CD4-positive, alpha-beta T cell (primary cell): ENCODE measurements at regions of chr1 and their contacts with region 1.

Region 1: DNA sequence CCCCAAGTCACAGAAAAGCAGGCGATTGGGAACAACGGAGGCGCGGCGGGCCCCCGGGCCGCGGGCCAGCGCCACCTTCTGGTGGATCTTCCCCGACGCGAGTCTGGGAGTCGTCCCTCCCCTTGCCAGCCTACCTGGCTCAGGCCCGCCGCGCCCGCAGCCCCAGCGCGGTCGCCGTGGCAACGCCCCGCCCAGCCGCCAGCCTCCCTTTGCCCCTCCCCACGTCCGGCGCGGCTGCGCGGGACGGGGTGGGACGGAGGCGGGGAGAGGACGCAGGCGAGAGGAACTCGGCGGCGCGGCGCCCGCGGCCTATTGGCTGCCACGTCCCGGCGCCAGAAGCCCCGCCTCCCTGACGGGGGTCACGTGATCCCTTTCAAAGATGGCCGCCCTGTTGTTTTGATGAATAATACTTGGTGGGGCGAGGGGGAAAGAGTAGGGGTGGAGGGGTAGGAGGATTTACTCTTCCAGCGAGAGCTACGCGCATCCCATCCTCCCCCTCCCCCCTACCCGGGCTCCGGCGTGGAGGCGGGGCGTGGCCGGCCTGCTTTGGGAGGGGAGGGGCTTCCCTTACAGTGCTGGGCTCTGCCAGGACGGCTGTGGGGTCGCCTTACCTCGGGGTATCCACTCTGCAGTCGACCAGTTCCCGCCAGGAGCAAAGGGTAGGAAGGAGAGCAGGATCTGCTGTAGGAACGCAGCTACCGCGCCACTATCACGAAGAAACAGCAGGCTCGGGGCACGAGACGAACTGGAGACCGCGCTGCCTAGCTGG is at the start of gene UBE4B:
- DNase-seq: peak; percentile 96 to 100 (median 99)
- ATAC-seq: peak; percentile 93
- H3K4me3 ChIP-seq: peak within 1 kb of the TSS; percentile 99
- H3K4me3 Mint-ChIP-seq: peak within 1 kb of the TSS; percentile 98
- H3K27ac ChIP-seq: peak within 1 kb of the TSS; percentile 91 to 95
- H3K27ac Mint-ChIP-seq: peak within 1 kb of the TSS; percentile 99
- H3K4me1 ChIP-seq: peaks cover 28% of the 10 kb centered on the region
- H3K4me1 Mint-ChIP-seq: peaks cover 30% of the 10 kb centered on the region
- H3K27me3 ChIP-seq: no peaks in the 10 kb centered on the region
- H3K27me3 Mint-ChIP-seq: no peaks in the 10 kb centered on the region
- CTCF ChIP-seq: peak; percentile 74
- total RNA-seq, gene UBE4B: 27.9 to 28.7 TPM

Region 2: DNA sequence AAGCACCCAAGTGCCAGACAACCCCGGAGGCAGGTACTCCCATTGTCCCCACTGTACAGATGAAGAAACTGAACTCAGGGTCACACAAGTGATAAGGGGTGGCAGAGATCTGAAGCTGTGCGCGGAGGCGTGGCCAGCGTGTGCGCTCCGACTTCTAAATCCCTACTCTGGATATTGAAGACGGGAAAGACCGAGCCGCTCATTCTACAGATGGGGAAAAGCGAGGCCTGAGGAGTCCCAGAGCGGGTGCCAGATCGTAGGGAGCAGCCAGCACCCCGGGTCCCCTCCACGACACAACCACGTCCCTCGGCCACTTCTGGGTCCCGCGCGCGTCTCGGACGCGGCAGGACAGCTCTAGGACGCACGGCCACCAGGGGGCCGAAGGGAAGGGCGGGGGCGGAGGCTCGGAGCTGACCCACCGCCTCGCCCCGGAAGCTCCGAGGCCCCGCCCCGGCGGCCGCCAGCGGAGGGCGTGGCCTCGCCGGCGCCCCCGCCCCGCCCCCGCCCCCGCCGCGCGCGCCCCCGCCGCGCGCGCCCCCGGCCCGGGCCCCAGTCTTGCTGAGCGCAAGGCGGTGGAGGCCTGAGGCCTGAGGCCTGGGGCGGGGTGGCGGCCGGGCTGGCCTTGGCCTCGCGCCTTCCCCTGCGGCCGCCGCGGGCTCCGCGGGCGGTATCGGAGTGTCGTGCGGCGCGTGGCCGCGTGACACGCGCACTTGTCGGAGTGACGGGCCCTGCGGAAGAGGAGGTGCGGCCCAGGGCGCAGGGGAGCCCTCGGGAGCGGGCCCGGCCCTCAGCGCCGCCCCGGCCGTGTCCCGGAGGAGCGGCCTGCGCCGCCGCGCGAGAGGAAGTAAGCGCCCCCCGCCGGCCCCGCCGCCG is 798.3 kb before region 1 on chr1 and contains the start of gene H6PD:
- CTCF ChIA-PET with region 1: no interaction called
- POLR2A ChIA-PET with region 1: no interaction called
- intact Hi-C with region 1: loop called in 1 of 2 experiments (anchors 10 kb)
- DNase-seq: peak; percentile 39 to 91 (median 66)
- ATAC-seq: peak; percentile 80
- H3K4me3 ChIP-seq: peak within 1 kb of the TSS; percentile 78
- H3K4me3 Mint-ChIP-seq: peak within 1 kb of the TSS; percentile 97
- H3K27ac ChIP-seq: peak within 1 kb of the TSS; percentile 59 to 68
- H3K27ac Mint-ChIP-seq: peak within 1 kb of the TSS; percentile 87
- H3K4me1 ChIP-seq: peaks cover 41% of the 10 kb centered on the region
- H3K4me1 Mint-ChIP-seq: peaks cover 37% of the 10 kb centered on the region
- H3K27me3 ChIP-seq: no peaks in the 10 kb centered on the region
- H3K27me3 Mint-ChIP-seq: no peaks in the 10 kb centered on the region
- CTCF ChIP-seq: peak; percentile 14
- total RNA-seq, gene H6PD: 13.6 to 13.9 TPM

Region 3: DNA sequence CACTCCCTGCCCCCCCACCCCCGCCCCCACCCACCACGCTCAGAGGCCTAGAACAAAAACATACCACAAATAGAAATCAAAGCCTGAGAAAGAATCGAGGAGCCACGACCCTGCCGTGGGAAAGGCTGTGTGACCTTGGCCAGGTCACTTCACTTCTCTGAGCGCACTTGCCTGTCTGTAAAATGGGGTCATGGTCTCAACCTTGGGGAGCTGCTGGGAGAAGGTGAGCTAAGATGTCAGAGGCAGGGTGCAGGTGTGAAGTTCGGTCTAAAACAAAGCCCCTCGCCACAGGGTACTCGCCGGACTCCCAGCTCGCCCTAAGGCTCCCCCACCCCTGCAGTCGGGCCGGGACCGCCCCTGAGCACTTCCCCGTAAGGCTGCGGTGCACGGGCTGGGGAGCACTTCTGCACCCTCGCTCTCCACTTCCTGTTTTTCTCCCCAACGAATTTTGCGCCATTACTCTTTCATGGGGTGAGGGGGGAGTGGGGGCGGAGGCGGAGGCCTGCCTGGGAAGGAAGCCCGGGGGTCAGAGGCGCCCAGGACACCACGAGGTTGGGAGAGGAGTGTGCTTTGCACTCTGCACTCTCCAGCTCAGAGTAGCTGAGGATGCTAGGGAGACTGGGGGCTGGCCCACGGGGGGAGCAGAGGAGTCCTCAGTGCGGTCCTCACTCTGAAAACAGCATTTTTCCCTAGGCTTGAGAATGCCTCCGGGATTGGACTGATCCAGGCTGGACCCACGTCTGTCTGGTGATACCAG is 403.2 kb before region 1 on chr1:
- CTCF ChIA-PET with region 1: no interaction called
- POLR2A ChIA-PET with region 1: no interaction called
- intact Hi-C with region 1: loop called in 1 of 2 experiments (anchors 5 kb)
- DNase-seq: peak; percentile 41 to 91 (median 76)
- ATAC-seq: peak; percentile 52
- H3K4me3 ChIP-seq: peak overlapping the region; percentile 97
- H3K4me3 Mint-ChIP-seq: peak overlapping the region; percentile 98
- H3K27ac ChIP-seq: peak overlapping the region; percentile 72 to 84
- H3K27ac Mint-ChIP-seq: peak overlapping the region; percentile 92
- H3K4me1 ChIP-seq: peaks cover 77% of the 10 kb centered on the region
- H3K4me1 Mint-ChIP-seq: peaks cover 70% of the 10 kb centered on the region
- H3K27me3 ChIP-seq: no peaks in the 10 kb centered on the region
- H3K27me3 Mint-ChIP-seq: no peaks in the 10 kb centered on the region
- CTCF ChIP-seq: no peak

Region 4: DNA sequence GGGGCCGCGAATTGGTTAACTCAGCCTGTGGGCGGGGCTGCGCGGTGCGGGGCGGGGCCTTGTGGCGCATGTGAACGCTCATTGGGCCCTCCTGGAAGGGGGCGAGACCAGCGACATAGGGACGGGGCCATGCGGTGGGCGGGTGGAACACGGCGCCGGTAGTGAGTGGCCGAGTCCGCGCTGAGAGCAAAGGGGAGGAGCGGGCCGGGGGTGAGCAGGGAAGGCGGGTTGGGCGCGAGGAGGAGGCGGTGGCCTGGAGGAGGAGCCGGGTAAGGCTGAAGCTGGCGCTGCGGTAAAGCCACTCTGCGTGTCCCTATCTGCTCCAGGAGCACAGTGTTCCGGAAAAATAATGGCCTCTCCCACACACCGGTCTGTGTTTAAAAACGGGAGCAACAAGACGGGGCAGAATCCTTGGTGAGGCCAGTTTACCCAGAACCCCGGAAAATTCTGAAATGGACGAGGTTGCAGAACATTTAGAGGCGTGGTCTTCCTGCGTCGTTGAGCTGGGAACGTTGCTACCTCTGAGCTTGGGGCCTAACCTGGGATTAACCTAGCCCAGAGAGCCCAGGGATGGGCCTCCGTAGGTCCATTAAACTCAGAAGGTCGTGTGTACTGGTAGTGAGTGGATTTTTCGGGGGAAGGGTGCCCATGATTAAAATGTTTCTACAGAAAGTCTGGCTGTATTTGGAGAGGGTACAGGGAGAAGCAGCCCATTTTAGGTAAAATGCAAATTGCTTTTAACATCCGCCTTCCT is 122.2 kb before region 1 on chr1:
- CTCF ChIA-PET with region 1: interaction called, 3 read pairs
- POLR2A ChIA-PET with region 1: interaction called, 3 read pairs
- intact Hi-C with region 1: loop called in 1 of 2 experiments (anchors 1 kb)
- DNase-seq: peak; percentile 100
- ATAC-seq: peak; percentile 90
- H3K4me3 ChIP-seq: peak overlapping the region; percentile 84
- H3K4me3 Mint-ChIP-seq: peak overlapping the region; percentile 96
- H3K27ac ChIP-seq: peak overlapping the region; percentile 65 to 70
- H3K27ac Mint-ChIP-seq: peak overlapping the region; percentile 94
- H3K4me1 ChIP-seq: peaks cover 23% of the 10 kb centered on the region
- H3K4me1 Mint-ChIP-seq: peaks cover 36% of the 10 kb centered on the region
- H3K27me3 ChIP-seq: no peaks in the 10 kb centered on the region
- H3K27me3 Mint-ChIP-seq: no peaks in the 10 kb centered on the region
- CTCF ChIP-seq: no peak

Region 5: GRCh38 chr1:10398734-10399623 is 366.2 kb after region 1 on chr1 and contains the start of gene PGD:
- CTCF ChIA-PET with region 1: no interaction called
- POLR2A ChIA-PET with region 1: no interaction called
- intact Hi-C with region 1: loop called in 1 of 2 experiments (anchors 2 kb)
- DNase-seq: peak; percentile 92 to 98 (median 96)
- ATAC-seq: peak; percentile 97
- H3K4me3 ChIP-seq: peak within 1 kb of the TSS; percentile 96
- H3K4me3 Mint-ChIP-seq: peak within 1 kb of the TSS; percentile 98
- H3K27ac ChIP-seq: peak within 1 kb of the TSS; percentile 56 to 70
- H3K27ac Mint-ChIP-seq: peak within 1 kb of the TSS; percentile 79
- H3K4me1 ChIP-seq: peaks cover 21% of the 10 kb centered on the region
- H3K4me1 Mint-ChIP-seq: peaks cover 20% of the 10 kb centered on the region
- H3K27me3 ChIP-seq: no peaks in the 10 kb centered on the region
- H3K27me3 Mint-ChIP-seq: no peaks in the 10 kb centered on the region
- CTCF ChIP-seq: no peak
- total RNA-seq, gene PGD: 16.7 to 17.4 TPM

Region 6: GRCh38 chr1:11012250-11013171 is 979.7 kb after region 1 on chr1 and contains the start of gene TARDBP:
- CTCF ChIA-PET with region 1: no interaction called
- POLR2A ChIA-PET with region 1: no interaction called
- intact Hi-C with region 1: loop called in 1 of 2 experiments (anchors 10 kb)
- DNase-seq: peak; percentile 80 to 95 (median 88)
- ATAC-seq: peak; percentile 85
- H3K4me3 ChIP-seq: peak within 1 kb of the TSS; percentile 85
- H3K4me3 Mint-ChIP-seq: peak within 1 kb of the TSS; percentile 94
- H3K27ac ChIP-seq: peak within 1 kb of the TSS; percentile 91 to 99
- H3K27ac Mint-ChIP-seq: peak within 1 kb of the TSS; percentile 98
- H3K4me1 ChIP-seq: peaks cover 44% of the 10 kb centered on the region
- H3K4me1 Mint-ChIP-seq: peaks cover 34% of the 10 kb centered on the region
- H3K27me3 ChIP-seq: no peaks in the 10 kb centered on the region
- H3K27me3 Mint-ChIP-seq: no peaks in the 10 kb centered on the region
- CTCF ChIP-seq: no peak
- total RNA-seq, gene TARDBP: 141 to 149 TPM